MCF 10A (cell line): ENCODE measurements at regions of chr4 and their contacts with region 1.

Region 1: GRCh38 chr4:74311696-74312313 is 3.5 kb downstream of the EPGN start:
- DNase-seq: peak; percentile 83
- H3K4me3 Mint-ChIP-seq: peak overlapping the region; percentile 47
- H3K27ac Mint-ChIP-seq: no peak overlapping the region
- H3K4me1 Mint-ChIP-seq: peaks cover 26% of the 10 kb centered on the region
- H3K27me3 Mint-ChIP-seq: no peaks in the 10 kb centered on the region
- CTCF ChIP-seq: peak; percentile 50

Region 2: GRCh38 chr4:73653695-73654106 is 658.1 kb before region 1 on chr4:
- CTCF ChIA-PET with region 1: interaction called, 3 read pairs
- POLR2A ChIA-PET with region 1: no interaction called
- intact Hi-C with region 1: loop called (anchors 5 kb)
- DNase-seq: peak; percentile 71
- H3K4me3 Mint-ChIP-seq: no peak overlapping the region
- H3K27ac Mint-ChIP-seq: no peak overlapping the region
- H3K4me1 Mint-ChIP-seq: peaks cover 14% of the 10 kb centered on the region
- H3K27me3 Mint-ChIP-seq: no peaks in the 10 kb centered on the region
- CTCF ChIP-seq: peak; percentile 52

Region 3: DNA sequence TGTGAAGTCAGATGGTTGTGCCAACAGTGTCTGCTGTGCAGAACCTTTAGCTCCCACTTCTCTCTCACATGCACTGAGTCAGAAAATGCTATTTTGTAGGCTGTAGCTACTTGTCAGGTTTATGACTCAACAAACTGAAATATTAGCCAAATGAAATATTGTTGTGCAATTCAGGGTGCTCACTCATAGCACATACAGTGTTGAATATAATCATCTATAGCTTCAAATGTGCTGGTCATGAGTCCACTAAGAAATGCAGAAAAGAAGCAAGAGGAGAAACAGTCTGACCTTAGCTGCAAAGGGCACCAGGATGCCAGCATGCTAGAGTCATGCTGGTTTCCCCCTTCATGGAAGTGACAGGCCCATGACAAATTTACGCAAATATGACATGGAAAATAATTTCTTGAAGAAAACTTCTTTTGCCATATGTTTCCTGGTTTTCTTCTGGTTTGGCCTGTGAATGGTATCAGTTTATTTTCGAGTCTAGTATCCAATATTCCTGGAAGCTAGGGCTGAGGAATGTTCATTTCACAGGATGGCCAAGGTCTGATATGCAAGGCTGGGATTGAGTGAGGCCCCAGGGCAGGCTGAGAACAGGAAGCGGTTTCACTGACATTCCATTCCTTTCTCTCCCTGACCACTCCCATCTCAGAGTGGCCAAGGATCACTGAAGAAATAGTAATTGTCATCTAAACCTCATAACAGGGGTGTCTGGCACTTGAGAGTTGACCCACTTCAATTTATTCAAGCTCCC is 202.5 kb before region 1 on chr4:
- CTCF ChIA-PET with region 1: interaction called, 4 read pairs
- POLR2A ChIA-PET with region 1: interaction called, 28 read pairs
- intact Hi-C with region 1: loop called (anchors 5 kb)
- DNase-seq: peak; percentile 96
- H3K4me3 Mint-ChIP-seq: peak overlapping the region; percentile 14
- H3K27ac Mint-ChIP-seq: peak overlapping the region; percentile 96
- H3K4me1 Mint-ChIP-seq: peaks cover 55% of the 10 kb centered on the region
- H3K27me3 Mint-ChIP-seq: no peaks in the 10 kb centered on the region
- CTCF ChIP-seq: no peak

Region 4: DNA sequence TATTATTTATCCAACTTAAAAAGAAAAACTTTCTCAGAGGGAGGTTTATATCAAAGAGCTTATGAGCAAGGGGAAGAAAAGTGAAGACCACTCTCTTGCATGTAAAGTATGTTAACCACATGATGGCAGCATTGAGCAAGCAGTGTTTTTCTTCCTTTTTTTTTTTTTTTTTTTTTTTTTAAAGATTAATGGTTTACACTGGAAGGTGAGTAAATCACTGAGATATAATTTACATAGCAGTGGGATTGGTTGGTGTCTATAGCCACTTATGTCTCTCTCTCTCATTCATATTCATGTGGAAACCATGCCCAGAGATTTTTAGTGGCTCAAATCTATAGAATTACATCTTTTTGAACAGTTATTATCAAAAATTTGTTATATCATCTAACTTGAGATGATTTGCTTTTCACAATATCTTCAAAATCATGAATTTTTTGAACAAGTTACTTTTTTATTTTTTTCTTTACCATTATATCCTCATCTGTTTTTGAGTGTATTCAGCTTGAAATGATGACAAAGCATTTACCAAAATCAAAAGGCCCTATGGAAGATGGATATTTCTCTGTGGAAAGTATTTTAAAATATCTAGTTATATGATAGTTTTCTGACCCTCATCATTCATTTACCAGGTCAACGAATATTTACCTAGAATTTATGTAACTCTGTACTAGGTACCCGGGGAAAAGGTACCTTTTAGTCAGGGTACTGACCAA is 122.3 kb before region 1 on chr4:
- CTCF ChIA-PET with region 1: interaction called, 6 read pairs
- POLR2A ChIA-PET with region 1: interaction called, 8 read pairs
- intact Hi-C with region 1: loop called (anchors 1 kb)
- DNase-seq: peak; percentile 71
- H3K4me3 Mint-ChIP-seq: no peak overlapping the region
- H3K27ac Mint-ChIP-seq: no peak overlapping the region
- H3K4me1 Mint-ChIP-seq: no peaks in the 10 kb centered on the region
- H3K27me3 Mint-ChIP-seq: no peaks in the 10 kb centered on the region
- CTCF ChIP-seq: peak; percentile 61

Region 5: GRCh38 chr4:74237425-74237966 is 74.3 kb before region 1 on chr4:
- CTCF ChIA-PET with region 1: interaction called, 3 read pairs
- POLR2A ChIA-PET with region 1: interaction called, 132 read pairs
- intact Hi-C with region 1: no loop called
- DNase-seq: peak; percentile 55
- H3K4me3 Mint-ChIP-seq: no peak overlapping the region
- H3K27ac Mint-ChIP-seq: no peak overlapping the region
- H3K4me1 Mint-ChIP-seq: peaks cover 10% of the 10 kb centered on the region
- H3K27me3 Mint-ChIP-seq: no peaks in the 10 kb centered on the region
- CTCF ChIP-seq: no peak

Region 6: GRCh38 chr4:74364652-74365491 is 53.1 kb after region 1 on chr4 and contains the start of gene EREG:
- CTCF ChIA-PET with region 1: interaction called, 3 read pairs
- POLR2A ChIA-PET with region 1: interaction called, 18 read pairs
- intact Hi-C with region 1: no loop called
- DNase-seq: peak; percentile 66
- H3K4me3 Mint-ChIP-seq: peak within 1 kb of the TSS; percentile 77
- H3K27ac Mint-ChIP-seq: peak within 1 kb of the TSS; percentile 59
- H3K4me1 Mint-ChIP-seq: peaks cover 17% of the 10 kb centered on the region
- H3K27me3 Mint-ChIP-seq: no peaks in the 10 kb centered on the region
- CTCF ChIP-seq: no peak
- total RNA-seq, gene EREG: 28.3 and 34.0 TPM in 2 replicates